ENCODE measurements at regions of chr9 and their contacts with region 1.

Region 1: DNA sequence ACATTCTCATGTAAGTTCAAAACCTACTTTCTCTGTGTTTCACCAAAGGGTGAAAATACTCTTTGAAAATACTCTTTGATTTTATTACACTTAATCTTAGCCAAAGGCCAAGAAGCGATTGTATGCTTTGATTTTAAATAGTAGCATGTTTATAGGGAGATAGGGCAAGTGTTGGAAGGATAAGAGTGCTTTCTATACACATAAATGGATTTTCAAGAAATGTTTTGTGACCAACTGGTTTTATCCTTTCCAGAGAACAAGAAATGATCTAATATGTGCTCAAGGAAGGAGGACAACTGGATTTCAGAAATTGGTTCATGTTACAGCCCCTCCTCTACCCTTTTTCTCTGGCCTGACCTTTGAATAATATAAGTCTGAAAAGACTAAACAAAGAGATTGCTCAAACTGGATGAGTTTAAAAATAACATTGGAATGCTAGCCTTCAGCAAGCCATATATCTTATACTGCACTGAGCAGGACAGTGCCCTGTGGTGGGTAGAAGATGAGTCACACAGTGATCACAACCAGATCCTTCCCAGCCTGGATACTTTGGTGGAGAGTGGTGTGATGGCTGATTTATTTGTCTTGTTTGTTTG is 13.1 kb downstream of the PALM2AKAP2 start:
- DNase-seq: no peak
- ATAC-seq: peak in 2 of 4 donors; percentile 36 to 61
- H3K4me3 ChIP-seq: no peak overlapping the region
- H3K27ac ChIP-seq: no peak overlapping the region
- H3K4me1 ChIP-seq: no peaks in the 10 kb centered on the region
- H3K27me3 ChIP-seq: no peaks in the 10 kb centered on the region
- CTCF ChIP-seq: no peak

Region 2: DNA sequence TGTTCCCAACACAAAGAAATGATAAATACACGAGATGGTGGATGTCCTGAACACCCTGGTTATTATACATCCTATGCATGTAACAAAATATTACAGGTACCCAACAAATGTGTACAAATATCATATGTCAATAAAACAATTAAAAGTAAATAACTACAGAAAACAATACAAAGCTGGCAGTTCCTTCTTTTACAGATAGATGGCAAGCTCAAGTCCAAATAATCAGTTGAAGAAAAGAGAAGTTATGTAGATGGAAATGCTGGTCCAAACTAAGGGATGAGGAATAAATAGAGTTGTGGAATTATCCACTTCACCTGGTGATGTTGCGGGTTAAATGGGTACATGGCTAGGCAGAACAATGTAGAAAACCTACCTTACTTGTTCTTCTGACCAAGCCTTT is 66.4 kb after region 1 on chr9:
- intact Hi-C with region 1: loop called in 1 of 3 experiments (anchors 10 kb)
- DNase-seq: no peak
- ATAC-seq: no peak
- H3K4me3 ChIP-seq: no peak overlapping the region
- H3K27ac ChIP-seq: no peak overlapping the region
- H3K4me1 ChIP-seq: no peaks in the 10 kb centered on the region
- H3K27me3 ChIP-seq: no peaks in the 10 kb centered on the region
- CTCF ChIP-seq: no peak

Measured in pancreas (tissue), 10 donors.